ENCODE measurements at regions of chr12 and their contacts with region 1.

Region 1: GRCh38 chr12:48157018-48157888 is at the start of gene ASB8:
- DNase-seq: peak; percentile 100
- H3K4me3 Mint-ChIP-seq: peak within 1 kb of the TSS; percentile 96
- H3K27ac Mint-ChIP-seq: peak within 1 kb of the TSS; percentile 94
- H3K4me1 Mint-ChIP-seq: peaks cover 37% of the 10 kb centered on the region
- H3K27me3 Mint-ChIP-seq: no peaks in the 10 kb centered on the region
- total RNA-seq, gene ASB8: 43.4 to 45.6 TPM

Region 2: GRCh38 chr12:47785036-47785886 is 372.0 kb before region 1 on chr12:
- CTCF ChIA-PET with region 1: no interaction called
- POLR2A ChIA-PET with region 1: no interaction called
- DNase-seq: no peak
- H3K4me3 Mint-ChIP-seq: no peak overlapping the region
- H3K27ac Mint-ChIP-seq: no peak overlapping the region
- H3K4me1 Mint-ChIP-seq: peaks cover 10% of the 10 kb centered on the region
- H3K27me3 Mint-ChIP-seq: no peaks in the 10 kb centered on the region

Region 3: GRCh38 chr12:47963340-47964040 is 193.8 kb before region 1 on chr12 and contains the start of gene TMEM106C:
- CTCF ChIA-PET with region 1: interaction called, 11 read pairs
- POLR2A ChIA-PET with region 1: interaction called, 6 read pairs
- DNase-seq: peak; percentile 92
- H3K4me3 Mint-ChIP-seq: peak within 1 kb of the TSS; percentile 99
- H3K27ac Mint-ChIP-seq: peak within 1 kb of the TSS; percentile 79
- H3K4me1 Mint-ChIP-seq: peaks cover 44% of the 10 kb centered on the region
- H3K27me3 Mint-ChIP-seq: peaks cover 35% of the 10 kb centered on the region
- total RNA-seq, gene TMEM106C: 139 to 141 TPM

Region 4: GRCh38 chr12:48051681-48052080 is 105.6 kb before region 1 on chr12:
- CTCF ChIA-PET with region 1: interaction called, 10 read pairs
- POLR2A ChIA-PET with region 1: no interaction called
- DNase-seq: no peak
- H3K4me3 Mint-ChIP-seq: no peak overlapping the region
- H3K27ac Mint-ChIP-seq: no peak overlapping the region
- H3K4me1 Mint-ChIP-seq: peaks cover 6% of the 10 kb centered on the region
- H3K27me3 Mint-ChIP-seq: no peaks in the 10 kb centered on the region

Region 5: GRCh38 chr12:48084066-48084465 is 73.2 kb before region 1 on chr12:
- CTCF ChIA-PET with region 1: interaction called, 12 read pairs
- POLR2A ChIA-PET with region 1: interaction called, 3 read pairs
- DNase-seq: no peak
- H3K4me3 Mint-ChIP-seq: no peak overlapping the region
- H3K27ac Mint-ChIP-seq: no peak overlapping the region
- H3K4me1 Mint-ChIP-seq: no peaks in the 10 kb centered on the region
- H3K27me3 Mint-ChIP-seq: no peaks in the 10 kb centered on the region

Region 6: GRCh38 chr12:48105862-48106680 is 51.2 kb before region 1 on chr12 and contains the start of gene SENP1:
- CTCF ChIA-PET with region 1: interaction called, 6 read pairs
- POLR2A ChIA-PET with region 1: interaction called, 54 read pairs
- DNase-seq: peak; percentile 91
- H3K4me3 Mint-ChIP-seq: peak within 1 kb of the TSS; percentile 94
- H3K27ac Mint-ChIP-seq: peak within 1 kb of the TSS; percentile 84
- H3K4me1 Mint-ChIP-seq: peaks cover 55% of the 10 kb centered on the region
- H3K27me3 Mint-ChIP-seq: no peaks in the 10 kb centered on the region
- total RNA-seq, gene SENP1: 42.4 to 43.7 TPM

Region 7: GRCh38 chr12:48183091-48183875 is 26.0 kb after region 1 on chr12 and contains the start of gene CCDC184:
- CTCF ChIA-PET with region 1: interaction called, 16 read pairs
- POLR2A ChIA-PET with region 1: interaction called, 19 read pairs
- DNase-seq: peak; percentile 80
- H3K4me3 Mint-ChIP-seq: peak within 1 kb of the TSS; percentile 86
- H3K27ac Mint-ChIP-seq: peak within 1 kb of the TSS; percentile 30
- H3K4me1 Mint-ChIP-seq: peaks cover 28% of the 10 kb centered on the region
- H3K27me3 Mint-ChIP-seq: peaks cover 62% of the 10 kb centered on the region
- total RNA-seq, gene CCDC184: 0.63 to 0.65 TPM

Region 8: DNA sequence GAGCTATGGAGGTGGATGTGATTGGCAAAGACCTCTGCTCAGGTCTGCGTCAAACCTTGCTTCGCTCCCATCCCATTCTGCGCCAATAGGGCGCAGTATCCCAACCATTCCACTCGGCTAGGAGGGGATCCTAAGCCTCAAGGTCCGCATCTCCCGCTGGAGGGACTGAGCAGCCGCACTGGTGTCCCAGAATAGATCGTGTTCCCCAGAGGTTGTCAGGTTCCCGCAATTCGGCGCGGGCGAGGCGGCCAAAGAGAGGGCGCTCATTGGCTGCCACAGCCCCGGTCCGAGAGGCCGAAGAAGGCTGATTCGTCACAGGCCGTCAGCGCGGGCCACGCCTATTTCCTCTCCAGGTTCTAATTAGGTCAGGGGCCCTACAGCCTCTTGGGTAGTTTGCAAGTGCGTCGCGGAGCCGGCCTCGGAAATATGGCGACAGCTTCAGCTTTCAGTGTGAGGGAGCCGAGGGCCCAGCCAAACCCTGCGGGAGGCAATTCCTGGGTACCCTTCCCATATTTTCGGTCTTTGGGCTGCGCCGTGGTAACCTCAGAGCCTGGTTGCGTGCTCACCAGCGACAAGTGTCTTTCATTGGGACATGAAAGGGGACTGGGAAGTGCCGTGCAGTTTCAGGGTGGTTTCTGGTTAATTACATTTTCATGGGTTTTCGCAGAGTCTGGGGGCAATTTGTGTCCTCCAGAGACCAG is 40.9 kb after region 1 on chr12:
- CTCF ChIA-PET with region 1: interaction called, 21 read pairs
- POLR2A ChIA-PET with region 1: interaction called, 35 read pairs
- DNase-seq: peak; percentile 95
- H3K4me3 Mint-ChIP-seq: peak overlapping the region; percentile 80
- H3K27ac Mint-ChIP-seq: peak overlapping the region; percentile 96
- H3K4me1 Mint-ChIP-seq: peaks cover 35% of the 10 kb centered on the region
- H3K27me3 Mint-ChIP-seq: peaks cover 15% of the 10 kb centered on the region

Region 9: DNA sequence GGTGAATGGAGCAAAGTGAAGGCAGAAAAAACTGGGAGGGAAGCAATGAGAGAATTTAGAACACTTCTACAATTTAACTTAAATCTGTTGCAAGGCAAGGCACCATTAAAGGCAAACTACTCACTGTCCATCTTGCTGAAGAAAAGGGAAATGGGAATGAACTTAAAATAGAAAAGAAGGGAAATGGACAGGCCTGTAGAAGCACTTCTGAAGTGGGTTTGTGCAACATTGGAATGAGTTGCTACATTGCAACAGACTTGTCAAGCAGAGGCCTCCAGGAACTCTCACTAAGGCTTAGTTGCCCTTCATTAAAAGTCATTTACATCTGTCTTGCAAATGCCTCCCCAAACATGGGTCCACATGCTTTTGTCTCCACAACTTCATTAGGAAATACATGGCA is 59.5 kb after region 1 on chr12:
- CTCF ChIA-PET with region 1: no interaction called
- POLR2A ChIA-PET with region 1: no interaction called
- DNase-seq: no peak
- H3K4me3 Mint-ChIP-seq: no peak overlapping the region
- H3K27ac Mint-ChIP-seq: no peak overlapping the region
- H3K4me1 Mint-ChIP-seq: no peaks in the 10 kb centered on the region
- H3K27me3 Mint-ChIP-seq: peaks cover 18% of the 10 kb centered on the region